Aorta (tissue), 5 donors: ENCODE measurements at regions of chr5 and their contacts with region 1.

Region 1: DNA sequence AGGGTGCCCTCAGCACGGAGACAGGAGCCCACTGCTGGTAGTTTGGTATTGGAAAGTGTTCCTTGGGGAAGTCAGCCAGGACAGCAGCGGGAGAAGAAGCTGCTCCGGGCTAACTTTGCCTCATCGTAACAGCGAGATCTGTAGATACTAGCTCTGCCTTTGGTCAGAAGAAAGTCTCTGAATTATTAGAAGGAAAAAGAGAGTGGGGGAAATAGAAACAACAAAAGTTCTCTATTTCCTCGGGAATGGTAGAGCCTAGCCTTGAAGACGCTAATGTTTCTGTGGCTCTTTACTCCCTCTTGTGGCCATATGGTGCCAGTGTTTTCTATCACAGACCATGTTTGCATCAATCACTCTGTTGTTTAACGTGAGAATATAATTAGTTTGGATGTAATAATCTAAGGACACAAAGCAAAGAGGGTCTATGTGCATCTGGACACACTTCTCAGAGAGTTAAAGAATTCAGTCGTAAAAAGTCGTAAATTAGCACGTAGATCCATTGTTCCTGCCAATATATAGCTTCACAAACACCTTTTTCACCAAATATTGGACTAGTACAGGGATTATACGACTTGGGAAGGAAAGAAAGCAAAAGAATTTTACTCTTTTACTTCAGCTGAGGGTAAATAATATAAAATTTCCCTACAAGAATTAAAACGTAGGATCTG is 40.2 kb upstream of the HSD17B4 start:
- DNase-seq: peak; percentile 68 to 78
- ATAC-seq: peak; percentile 96
- H3K4me3 ChIP-seq: peak overlapping the region; percentile 49 to 90
- H3K27ac ChIP-seq: peak overlapping the region in 1 of 2 donors; percentile 42
- H3K4me1 ChIP-seq: no peaks in the 10 kb centered on the region
- H3K27me3 ChIP-seq: no peaks in the 10 kb centered on the region

Region 2: GRCh38 chr5:118987988-118988865 is 423.8 kb before region 1 on chr5 and contains the start of gene DTWD2:
- intact Hi-C with region 1: loop called (anchors 2 to 5 kb)
- DNase-seq: peak; percentile 95 to 98
- ATAC-seq: peak; percentile 100
- H3K4me3 ChIP-seq: peak within 1 kb of the TSS; percentile 54 to 61
- H3K27ac ChIP-seq: peak within 1 kb of the TSS in 1 of 2 donors; percentile 82
- H3K4me1 ChIP-seq: no peaks in the 10 kb centered on the region
- H3K27me3 ChIP-seq: no peaks in the 10 kb centered on the region
- total RNA-seq, gene DTWD2: 4.1 to 6.3 TPM

Region 3: DNA sequence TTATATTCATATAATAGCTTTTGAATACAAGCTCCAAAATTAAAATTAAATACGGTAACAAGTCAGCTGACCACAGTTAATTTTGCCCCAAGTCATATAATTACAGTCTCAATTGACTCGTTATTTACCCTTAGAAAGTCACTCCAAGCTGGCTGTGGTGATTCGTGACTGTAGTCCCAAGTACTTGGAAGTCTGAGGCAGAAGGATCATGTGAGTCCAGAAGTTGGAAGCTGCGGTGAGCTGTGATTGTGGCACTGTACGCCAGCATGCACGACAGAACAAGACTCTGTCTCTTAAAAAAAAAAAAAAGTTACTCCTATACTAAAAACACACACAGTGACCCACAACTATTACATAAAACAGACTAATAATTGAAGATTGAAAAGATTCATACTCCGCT is 392.1 kb before region 1 on chr5:
- intact Hi-C with region 1: loop called in 1 of 2 experiments (anchors 2 kb)
- DNase-seq: no peak
- ATAC-seq: no peak
- H3K4me3 ChIP-seq: no peak overlapping the region
- H3K27ac ChIP-seq: no peak overlapping the region
- H3K4me1 ChIP-seq: no peaks in the 10 kb centered on the region
- H3K27me3 ChIP-seq: peaks cover 0 to 1% of the 10 kb centered on the region in 2 donors

Region 4: GRCh38 chr5:119355685-119356611 is 56.1 kb before region 1 on chr5 and contains the start of gene TNFAIP8:
- intact Hi-C with region 1: loop called in 1 of 2 experiments (anchors 5 kb)
- DNase-seq: peak; percentile 84 to 86
- ATAC-seq: peak; percentile 78
- H3K4me3 ChIP-seq: peak within 1 kb of the TSS; percentile 70 to 82
- H3K27ac ChIP-seq: peak within 1 kb of the TSS in 1 of 2 donors; percentile 22
- H3K4me1 ChIP-seq: peaks cover 0 to 5% of the 10 kb centered on the region in 2 donors
- H3K27me3 ChIP-seq: no peaks in the 10 kb centered on the region
- total RNA-seq, gene TNFAIP8: 17.8 to 26.9 TPM